ENCODE measurements at regions of chr11 and their contacts with region 1.

Region 1: GRCh38 chr11:73350908-73351636 is 25.1 kb upstream of the RELT start:
- DNase-seq: peak; percentile 45 to 78 (median 68)
- ATAC-seq: peak; percentile 97
- H3K4me3 ChIP-seq: no peak overlapping the region
- H3K4me3 Mint-ChIP-seq: no peak overlapping the region
- H3K27ac ChIP-seq: no peak overlapping the region
- H3K27ac Mint-ChIP-seq: peak overlapping the region in 6 of 9 donors; percentile 45 to 83 (median 54)
- H3K4me1 ChIP-seq: no peaks in the 10 kb centered on the region
- H3K4me1 Mint-ChIP-seq: peaks cover 0 to 19% (median 3%) of the 10 kb centered on the region in 7 donors
- H3K27me3 ChIP-seq: no peaks in the 10 kb centered on the region
- H3K27me3 Mint-ChIP-seq: peaks cover 0 to 10% (median 5%) of the 10 kb centered on the region in 5 donors

Region 2: DNA sequence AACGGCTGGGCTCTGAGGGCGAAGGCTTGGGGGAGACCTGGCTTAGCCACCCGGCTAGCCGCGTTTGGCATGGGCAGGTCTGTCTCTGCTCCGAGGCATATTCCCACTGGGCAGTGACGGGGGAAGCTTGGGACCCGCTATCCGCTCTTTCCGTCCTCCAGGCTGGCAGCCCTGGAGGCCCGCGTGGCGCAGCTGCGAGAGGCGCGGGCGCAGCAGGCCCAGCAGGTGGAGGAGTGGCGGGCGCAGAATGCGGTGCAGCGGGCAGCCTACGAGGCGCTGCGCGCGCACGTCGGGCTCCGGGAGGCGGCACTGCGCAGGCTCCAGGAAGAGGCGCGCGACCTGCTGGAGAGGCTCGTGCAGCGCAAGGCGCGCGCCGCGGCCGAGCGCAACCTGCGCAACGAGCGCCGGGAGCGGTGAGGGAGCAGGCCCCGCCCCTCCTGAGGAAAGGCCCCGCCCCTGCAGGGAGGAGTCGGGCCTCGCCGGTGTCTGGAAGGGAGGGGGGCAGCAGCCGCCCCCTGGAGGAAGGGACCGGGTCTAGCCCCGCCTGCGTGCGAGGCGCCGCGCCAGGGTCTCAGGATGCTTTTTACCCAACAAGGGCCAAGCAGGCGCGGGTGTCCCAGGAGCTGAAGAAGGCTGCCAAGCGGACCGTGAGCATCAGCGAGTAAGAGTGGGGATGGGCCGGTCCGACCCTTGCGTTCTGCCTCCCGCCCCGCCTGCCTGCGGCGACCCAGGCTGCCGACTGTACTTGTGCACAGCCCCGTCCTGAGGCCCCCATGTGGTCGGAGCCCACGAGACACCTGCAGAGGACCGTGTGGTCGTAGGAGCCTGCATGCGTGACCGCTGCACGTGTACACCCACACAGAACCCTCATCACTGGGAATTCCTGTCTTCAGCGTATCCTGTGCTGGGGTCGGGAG is 528.9 kb before region 1 on chr11:
- CTCF ChIA-PET with region 1: no interaction called
- POLR2A ChIA-PET with region 1: no interaction called
- intact Hi-C with region 1: no loop called
- DNase-seq: peak; percentile 68 to 93 (median 82)
- ATAC-seq: peak; percentile 96
- H3K4me3 ChIP-seq: peak overlapping the region; percentile 33
- H3K4me3 Mint-ChIP-seq: peak overlapping the region in 4 of 10 donors; percentile 34 to 65 (median 48)
- H3K27ac ChIP-seq: peak overlapping the region; percentile 66
- H3K27ac Mint-ChIP-seq: peak overlapping the region in 6 of 9 donors; percentile 23 to 86 (median 68)
- H3K4me1 ChIP-seq: peaks cover 0 to 3% of the 10 kb centered on the region in 2 donors
- H3K4me1 Mint-ChIP-seq: peaks cover 13 to 30% (median 25%) of the 10 kb centered on the region in 7 donors
- H3K27me3 ChIP-seq: no peaks in the 10 kb centered on the region
- H3K27me3 Mint-ChIP-seq: no peaks in the 10 kb centered on the region

Region 3: GRCh38 chr11:72897506-72897905 is 453.6 kb before region 1 on chr11:
- CTCF ChIA-PET with region 1: no interaction called
- POLR2A ChIA-PET with region 1: no interaction called
- intact Hi-C with region 1: no loop called
- DNase-seq: no peak
- ATAC-seq: no peak
- H3K4me3 ChIP-seq: no peak overlapping the region
- H3K4me3 Mint-ChIP-seq: no peak overlapping the region
- H3K27ac ChIP-seq: no peak overlapping the region
- H3K27ac Mint-ChIP-seq: no peak overlapping the region
- H3K4me1 ChIP-seq: no peaks in the 10 kb centered on the region
- H3K4me1 Mint-ChIP-seq: peaks cover 0 to 2% (median 0%) of the 10 kb centered on the region in 7 donors
- H3K27me3 ChIP-seq: no peaks in the 10 kb centered on the region
- H3K27me3 Mint-ChIP-seq: no peaks in the 10 kb centered on the region

Region 4: GRCh38 chr11:73307323-73308002 is 43.6 kb before region 1 on chr11:
- CTCF ChIA-PET with region 1: interaction called, 3 read pairs
- POLR2A ChIA-PET with region 1: no interaction called
- intact Hi-C with region 1: loop called in 1 of 2 experiments (anchors 1 kb)
- DNase-seq: peak; percentile 75 to 90 (median 86)
- ATAC-seq: peak; percentile 83
- H3K4me3 ChIP-seq: peak overlapping the region; percentile 63
- H3K4me3 Mint-ChIP-seq: peak overlapping the region; percentile 83 to 95 (median 91)
- H3K27ac ChIP-seq: no peak overlapping the region
- H3K27ac Mint-ChIP-seq: peak overlapping the region in 5 of 9 donors; percentile 9 to 68 (median 31)
- H3K4me1 ChIP-seq: peaks cover 4 to 5% of the 10 kb centered on the region in 2 donors
- H3K4me1 Mint-ChIP-seq: peaks cover 8 to 13% (median 11%) of the 10 kb centered on the region in 7 donors
- H3K27me3 ChIP-seq: peaks cover 0 to 4% of the 10 kb centered on the region in 2 donors
- H3K27me3 Mint-ChIP-seq: peaks cover 14 to 55% (median 21%) of the 10 kb centered on the region in 5 donors

Region 5: DNA sequence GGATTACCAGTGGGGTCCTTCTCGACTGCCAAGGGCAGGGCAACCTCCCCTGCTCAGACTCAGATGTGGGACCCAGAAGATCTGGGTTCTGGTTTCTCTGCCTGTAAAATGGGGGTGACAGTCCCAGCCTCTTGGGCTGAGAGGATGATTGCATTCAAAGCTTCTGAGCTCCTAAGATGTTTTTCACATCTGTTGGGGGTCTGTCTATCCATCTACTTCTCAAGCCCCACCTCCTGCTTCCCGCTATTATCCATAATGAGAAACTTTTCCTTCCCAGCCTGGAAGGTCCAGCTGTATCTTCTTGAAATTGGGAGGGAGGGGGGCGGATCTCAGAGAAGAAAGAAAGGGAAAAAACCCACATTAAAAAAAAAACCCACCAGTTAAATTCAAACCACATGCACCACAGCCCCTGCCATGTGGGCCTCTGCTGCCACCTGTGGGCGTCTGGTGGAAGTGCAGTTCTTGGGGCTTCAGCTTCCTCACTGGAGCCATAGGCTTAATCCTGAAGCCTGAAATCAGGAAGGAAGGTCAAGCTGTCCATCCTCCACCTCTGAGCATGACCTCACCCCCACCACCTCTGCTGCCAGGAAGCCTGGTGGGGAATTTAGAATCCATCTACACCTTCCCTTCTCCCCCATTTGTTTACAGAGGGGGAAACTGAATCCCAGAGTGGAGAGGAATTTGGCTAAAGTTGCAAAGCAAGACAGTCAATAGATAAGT is 15.7 kb before region 1 on chr11:
- CTCF ChIA-PET with region 1: interaction called, 18 read pairs
- POLR2A ChIA-PET with region 1: no interaction called
- intact Hi-C with region 1: no loop called
- DNase-seq: peak; percentile 59 to 82 (median 68)
- ATAC-seq: peak; percentile 92
- H3K4me3 ChIP-seq: no peak overlapping the region
- H3K4me3 Mint-ChIP-seq: no peak overlapping the region
- H3K27ac ChIP-seq: no peak overlapping the region
- H3K27ac Mint-ChIP-seq: no peak overlapping the region
- H3K4me1 ChIP-seq: no peaks in the 10 kb centered on the region
- H3K4me1 Mint-ChIP-seq: peaks cover 0 to 6% (median 0%) of the 10 kb centered on the region in 7 donors
- H3K27me3 ChIP-seq: no peaks in the 10 kb centered on the region
- H3K27me3 Mint-ChIP-seq: peaks cover 0 to 11% (median 0%) of the 10 kb centered on the region in 5 donors

Region 6: GRCh38 chr11:73366265-73366610 is 15.2 kb after region 1 on chr11:
- CTCF ChIA-PET with region 1: interaction called, 81 read pairs
- POLR2A ChIA-PET with region 1: interaction called, 3 read pairs
- intact Hi-C with region 1: loop called in 1 of 2 experiments (anchors 2 kb)
- DNase-seq: peak in 7 of 9 donors; percentile 49 to 79 (median 66)
- ATAC-seq: peak; percentile 87
- H3K4me3 ChIP-seq: peak overlapping the region; percentile 42
- H3K4me3 Mint-ChIP-seq: peak overlapping the region; percentile 48 to 82 (median 66)
- H3K27ac ChIP-seq: peak overlapping the region; percentile 78
- H3K27ac Mint-ChIP-seq: peak overlapping the region; percentile 88 to 100 (median 98)
- H3K4me1 ChIP-seq: peaks cover 30% of the 10 kb centered on the region in 2 donors
- H3K4me1 Mint-ChIP-seq: peaks cover 14 to 39% (median 20%) of the 10 kb centered on the region in 7 donors
- H3K27me3 ChIP-seq: no peaks in the 10 kb centered on the region
- H3K27me3 Mint-ChIP-seq: no peaks in the 10 kb centered on the region

Region 7: DNA sequence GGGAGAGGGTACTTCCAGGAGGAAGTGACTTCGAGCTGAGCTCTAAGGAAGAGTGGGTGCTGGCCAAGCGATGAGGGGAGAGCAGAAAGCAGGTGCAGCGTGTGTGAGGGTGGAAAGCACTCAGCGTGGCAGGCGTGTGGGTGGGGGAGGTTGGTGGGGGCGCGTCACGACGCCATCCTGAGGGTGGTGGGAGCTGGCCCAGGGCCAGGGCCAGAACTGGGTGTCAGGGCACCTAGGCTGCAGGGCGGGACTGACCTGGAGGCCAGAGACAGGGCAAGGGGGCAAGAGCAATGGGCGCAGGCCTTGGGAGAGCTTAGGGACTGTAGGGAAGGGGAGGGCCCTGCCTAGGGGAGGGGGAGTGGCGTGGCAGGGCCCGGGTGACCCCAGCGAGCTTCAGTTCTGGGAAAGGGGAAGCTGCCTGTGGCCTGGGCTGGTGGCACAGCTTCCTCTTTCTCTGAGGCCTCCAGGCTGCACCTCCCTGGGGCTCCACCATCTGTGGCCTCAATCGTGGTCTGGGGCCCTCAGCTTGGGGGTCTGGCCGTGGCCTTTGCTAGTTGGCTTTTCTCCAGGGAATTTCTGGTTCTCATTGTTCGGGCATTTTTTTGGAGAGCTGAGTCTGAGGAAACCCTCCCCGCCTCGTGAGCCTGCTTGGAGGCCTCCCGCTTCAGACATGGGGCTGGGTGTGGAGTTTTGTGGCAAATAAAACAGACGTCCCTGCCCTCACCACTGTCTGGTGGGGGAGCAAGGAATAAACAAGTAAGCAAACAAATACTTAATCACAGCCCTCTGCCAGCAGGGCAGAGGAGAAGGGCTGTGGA is 34.0 kb after region 1 on chr11:
- CTCF ChIA-PET with region 1: interaction called, 205 read pairs
- POLR2A ChIA-PET with region 1: interaction called, 3 read pairs
- intact Hi-C with region 1: loop called in 1 of 2 experiments (anchors 2 kb)
- DNase-seq: no peak
- ATAC-seq: peak; percentile 70
- H3K4me3 ChIP-seq: no peak overlapping the region
- H3K4me3 Mint-ChIP-seq: peak overlapping the region in 9 of 10 donors; percentile 37 to 74 (median 67)
- H3K27ac ChIP-seq: peak overlapping the region; percentile 14
- H3K27ac Mint-ChIP-seq: peak overlapping the region; percentile 62 to 89 (median 72)
- H3K4me1 ChIP-seq: peaks cover 0 to 34% of the 10 kb centered on the region in 2 donors
- H3K4me1 Mint-ChIP-seq: peaks cover 61 to 71% (median 65%) of the 10 kb centered on the region in 7 donors
- H3K27me3 ChIP-seq: no peaks in the 10 kb centered on the region
- H3K27me3 Mint-ChIP-seq: no peaks in the 10 kb centered on the region

Region 8: GRCh38 chr11:73393479-73394380 is 42.7 kb after region 1 on chr11:
- CTCF ChIA-PET with region 1: interaction called, 205 read pairs
- POLR2A ChIA-PET with region 1: interaction called, 7 read pairs
- intact Hi-C with region 1: loop called (anchors 1 kb)
- DNase-seq: peak; percentile 43 to 74 (median 62)
- ATAC-seq: peak; percentile 69
- H3K4me3 ChIP-seq: no peak overlapping the region
- H3K4me3 Mint-ChIP-seq: peak overlapping the region in 1 of 10 donors; percentile 9
- H3K27ac ChIP-seq: no peak overlapping the region
- H3K27ac Mint-ChIP-seq: peak overlapping the region in 7 of 9 donors; percentile 14 to 75 (median 56)
- H3K4me1 ChIP-seq: no peaks in the 10 kb centered on the region
- H3K4me1 Mint-ChIP-seq: peaks cover 0 to 21% (median 5%) of the 10 kb centered on the region in 7 donors
- H3K27me3 ChIP-seq: no peaks in the 10 kb centered on the region
- H3K27me3 Mint-ChIP-seq: no peaks in the 10 kb centered on the region

Region 9: DNA sequence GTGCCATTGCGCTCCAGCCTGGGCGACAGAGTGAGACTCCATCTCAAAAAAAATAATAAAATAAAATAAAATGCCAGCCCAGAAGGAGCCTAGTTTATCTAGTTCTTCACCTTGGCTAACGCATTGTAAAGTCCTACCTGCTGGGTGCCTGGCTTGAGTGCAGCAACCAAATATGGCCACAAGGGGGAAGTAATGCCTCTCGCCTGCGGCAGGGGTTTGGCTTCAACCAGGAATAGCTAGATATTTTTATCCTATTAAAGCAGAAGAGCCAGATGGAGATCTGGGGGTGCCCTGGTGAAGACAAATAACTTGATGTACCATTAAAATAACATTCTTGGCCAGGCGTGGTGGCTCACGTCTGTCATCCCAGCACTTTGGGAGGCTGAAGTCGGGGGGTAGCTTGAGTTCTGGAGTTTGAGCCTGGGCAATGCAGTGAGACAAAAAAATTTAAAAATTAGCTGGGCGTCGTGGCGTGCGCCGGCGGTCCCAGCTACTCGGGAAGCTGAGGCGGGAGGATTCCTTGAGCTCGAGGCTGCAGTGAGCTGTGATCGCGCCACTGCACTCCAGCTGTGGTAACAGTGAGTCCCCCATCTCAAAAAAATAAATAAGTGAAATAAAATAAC is 274.7 kb after region 1 on chr11:
- CTCF ChIA-PET with region 1: interaction called, 12 read pairs
- POLR2A ChIA-PET with region 1: no interaction called
- intact Hi-C with region 1: loop called in 1 of 2 experiments (anchors 1 kb)
- DNase-seq: peak; percentile 38 to 75 (median 66)
- ATAC-seq: peak; percentile 88
- H3K4me3 ChIP-seq: no peak overlapping the region
- H3K4me3 Mint-ChIP-seq: peak overlapping the region in 1 of 10 donors; percentile 68
- H3K27ac ChIP-seq: no peak overlapping the region
- H3K27ac Mint-ChIP-seq: peak overlapping the region in 1 of 9 donors; percentile 59
- H3K4me1 ChIP-seq: peaks cover 0 to 3% of the 10 kb centered on the region in 2 donors
- H3K4me1 Mint-ChIP-seq: peaks cover 0 to 15% (median 0%) of the 10 kb centered on the region in 7 donors
- H3K27me3 ChIP-seq: no peaks in the 10 kb centered on the region
- H3K27me3 Mint-ChIP-seq: peaks cover 13 to 29% (median 27%) of the 10 kb centered on the region in 5 donors

Region 10: DNA sequence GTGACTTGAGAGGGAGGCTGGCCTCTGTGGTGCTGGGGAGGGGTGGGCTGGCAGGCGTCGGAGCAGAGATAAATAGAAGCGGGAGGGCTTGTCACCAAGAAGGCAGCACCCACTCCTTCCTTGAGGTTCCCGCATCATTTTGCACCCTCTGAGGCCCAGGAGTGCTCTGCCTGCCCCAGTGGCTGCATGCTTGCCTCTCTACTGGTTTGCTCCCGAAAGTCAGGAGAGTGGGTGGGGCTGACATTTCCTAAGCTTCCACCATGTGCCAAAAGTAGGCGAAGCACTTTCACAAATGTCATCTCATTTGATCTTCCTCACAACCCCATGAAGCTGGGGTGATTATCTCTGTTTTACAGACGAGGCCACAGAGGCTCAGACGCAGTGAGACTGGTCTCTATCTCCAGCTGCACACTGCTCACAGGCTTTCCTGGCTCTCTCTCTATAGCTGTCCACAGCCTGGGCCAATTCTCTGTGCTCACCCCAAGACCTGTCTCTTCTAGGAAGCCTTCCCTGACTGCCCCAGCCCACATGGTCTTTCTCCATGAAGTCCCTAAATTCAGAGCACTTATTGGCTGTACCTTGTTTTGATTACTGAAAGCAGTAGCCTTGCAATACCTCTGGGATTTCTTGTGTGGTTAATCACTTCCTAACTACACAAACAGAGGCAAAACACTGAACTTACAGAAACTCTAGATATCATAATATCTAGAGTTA is 660.4 kb after region 1 on chr11:
- CTCF ChIA-PET with region 1: no interaction called
- POLR2A ChIA-PET with region 1: no interaction called
- intact Hi-C with region 1: no loop called
- DNase-seq: peak in 8 of 9 donors; percentile 16 to 67 (median 46)
- ATAC-seq: peak; percentile 84
- H3K4me3 ChIP-seq: no peak overlapping the region
- H3K4me3 Mint-ChIP-seq: peak overlapping the region; percentile 55 to 81 (median 66)
- H3K27ac ChIP-seq: peak overlapping the region; percentile 61
- H3K27ac Mint-ChIP-seq: peak overlapping the region; percentile 80 to 98 (median 94)
- H3K4me1 ChIP-seq: peaks cover 83 to 95% of the 10 kb centered on the region in 2 donors
- H3K4me1 Mint-ChIP-seq: peaks cover 46 to 99% (median 87%) of the 10 kb centered on the region in 7 donors
- H3K27me3 ChIP-seq: no peaks in the 10 kb centered on the region
- H3K27me3 Mint-ChIP-seq: no peaks in the 10 kb centered on the region

Measured in naive thymus-derived CD4-positive, alpha-beta T cell (primary cell).